ENCODE measurements at regions of chr2 and their contacts with region 1.

Region 1: GRCh38 chr2:37711308-37711731 is 39.9 kb upstream of the CDC42EP3 start:
- DNase-seq: peak; percentile 91
- ATAC-seq: peak; percentile 88
- H3K4me3 ChIP-seq: no peak overlapping the region
- H3K27ac ChIP-seq: peak overlapping the region; percentile 71
- H3K4me1 ChIP-seq: peaks cover 12% of the 10 kb centered on the region
- H3K27me3 ChIP-seq: no peaks in the 10 kb centered on the region
- CTCF ChIP-seq: no peak
- POLR2A ChIP-seq: peak; percentile 39; the same call in 1 of the 2 replicates
- RAD21 ChIP-seq: no peak

Region 2: DNA sequence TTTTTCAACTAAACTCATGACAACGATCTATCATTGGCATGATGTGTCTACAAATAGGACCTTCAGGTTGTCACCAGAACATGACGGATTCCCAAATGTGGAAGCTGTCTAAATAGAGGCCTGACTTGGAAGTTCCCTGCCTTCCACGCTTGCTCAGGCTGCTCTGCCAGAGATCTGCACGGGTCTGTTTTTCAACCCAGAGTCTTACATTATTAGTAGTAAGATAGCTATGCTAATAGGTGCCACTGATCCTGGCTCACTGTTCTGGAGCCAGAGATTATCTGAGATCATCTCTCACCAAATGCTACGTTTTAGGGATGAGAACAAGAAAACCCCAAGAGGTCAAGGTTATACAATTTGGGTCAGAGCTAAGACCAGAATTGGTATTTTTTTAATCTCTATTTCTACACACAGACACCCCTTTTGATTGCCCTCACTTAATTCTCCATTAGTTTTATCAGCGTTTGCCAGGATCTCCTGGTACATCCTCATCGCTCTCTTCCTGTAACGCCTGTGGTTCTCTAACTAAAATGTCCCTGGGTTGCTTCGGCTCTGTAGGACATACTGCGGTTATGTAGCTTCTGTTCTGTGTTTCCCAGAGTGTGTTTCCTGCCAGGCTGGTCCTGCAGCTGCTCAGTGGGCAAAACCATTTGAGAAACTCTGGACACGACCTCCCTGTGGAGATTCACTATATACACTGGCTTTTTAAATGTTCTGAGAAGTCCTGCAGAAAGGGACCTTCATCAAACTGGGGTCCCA is 45.5 kb before region 1 on chr2:
- CTCF ChIA-PET with region 1: no interaction called
- POLR2A ChIA-PET with region 1: interaction called, 11 read pairs
- dilution Hi-C with region 1: no loop called
- in situ Hi-C with region 1: no loop called
- intact Hi-C with region 1: loop called (anchors 2 kb)
- DNase-seq: no peak
- ATAC-seq: no peak
- H3K4me3 ChIP-seq: no peak overlapping the region
- H3K27ac ChIP-seq: peak overlapping the region; percentile 65; the same call in 1 of the 2 replicates
- H3K4me1 ChIP-seq: peaks cover 32% of the 10 kb centered on the region
- H3K27me3 ChIP-seq: no peaks in the 10 kb centered on the region
- CTCF ChIP-seq: no peak
- POLR2A ChIP-seq: no peak
- RAD21 ChIP-seq: no peak

Region 3: GRCh38 chr2:37672104-37672869 is 39.0 kb before region 1 on chr2:
- CTCF ChIA-PET with region 1: no interaction called
- POLR2A ChIA-PET with region 1: interaction called, 5 read pairs
- dilution Hi-C with region 1: no loop called
- in situ Hi-C with region 1: no loop called
- intact Hi-C with region 1: loop called (anchors 2 kb)
- DNase-seq: peak; percentile 88
- ATAC-seq: peak; percentile 53
- H3K4me3 ChIP-seq: peak overlapping the region; percentile 99
- H3K27ac ChIP-seq: peak overlapping the region; percentile 87
- H3K4me1 ChIP-seq: peaks cover 7% of the 10 kb centered on the region
- H3K27me3 ChIP-seq: no peaks in the 10 kb centered on the region
- CTCF ChIP-seq: no peak
- POLR2A ChIP-seq: no peak
- RAD21 ChIP-seq: no peak; the same call in 1 of the 2 replicates

Region 4: GRCh38 chr2:37683921-37684780 is 27.2 kb before region 1 on chr2:
- CTCF ChIA-PET with region 1: no interaction called
- POLR2A ChIA-PET with region 1: no interaction called
- dilution Hi-C with region 1: no loop called
- in situ Hi-C with region 1: no loop called
- intact Hi-C with region 1: no loop called
- DNase-seq: peak; percentile 73
- ATAC-seq: peak; percentile 54; the same call in 1 of the 2 replicates
- H3K4me3 ChIP-seq: no peak overlapping the region
- H3K27ac ChIP-seq: no peak overlapping the region
- H3K4me1 ChIP-seq: peaks cover 11% of the 10 kb centered on the region
- H3K27me3 ChIP-seq: no peaks in the 10 kb centered on the region
- CTCF ChIP-seq: no peak
- POLR2A ChIP-seq: no peak
- RAD21 ChIP-seq: no peak

Region 5: GRCh38 chr2:37767956-37768925 is 56.9 kb after region 1 on chr2:
- CTCF ChIA-PET with region 1: interaction called, 3 read pairs
- POLR2A ChIA-PET with region 1: interaction called, 3 read pairs
- dilution Hi-C with region 1: no loop called
- in situ Hi-C with region 1: no loop called
- intact Hi-C with region 1: loop called (anchors 5 kb)
- DNase-seq: peak; percentile 92
- ATAC-seq: peak; percentile 86
- H3K4me3 ChIP-seq: no peak overlapping the region
- H3K27ac ChIP-seq: peak overlapping the region; percentile 97
- H3K4me1 ChIP-seq: peaks cover 37% of the 10 kb centered on the region
- H3K27me3 ChIP-seq: no peaks in the 10 kb centered on the region
- CTCF ChIP-seq: no peak
- POLR2A ChIP-seq: no peak
- RAD21 ChIP-seq: no peak

Region 6: DNA sequence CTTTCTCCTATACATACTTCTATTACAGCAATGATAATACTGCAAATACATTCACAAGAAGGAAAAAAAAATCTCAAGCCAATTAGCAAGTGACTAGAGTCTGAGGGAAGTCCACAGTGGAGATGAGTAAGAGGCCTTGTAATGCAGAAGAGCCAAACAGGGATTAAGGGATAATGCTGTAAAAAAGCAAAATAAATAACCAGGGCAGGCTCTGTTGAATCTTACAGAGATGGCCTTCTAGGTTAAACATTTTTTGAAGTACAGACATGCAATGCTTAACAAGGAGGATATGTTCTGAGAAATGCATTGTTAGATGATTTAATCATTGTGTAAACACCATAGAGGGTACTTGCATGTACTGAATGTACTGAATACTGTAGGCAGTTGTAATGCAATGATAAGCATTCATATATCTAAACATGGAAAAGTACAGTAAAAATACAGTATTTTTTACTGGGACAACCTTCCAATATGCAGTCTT is 91.6 kb after region 1 on chr2:
- CTCF ChIA-PET with region 1: no interaction called
- POLR2A ChIA-PET with region 1: no interaction called
- dilution Hi-C with region 1: no loop called
- in situ Hi-C with region 1: no loop called
- intact Hi-C with region 1: loop called (anchors 2 kb)
- DNase-seq: peak; percentile 99
- ATAC-seq: peak; percentile 93
- H3K4me3 ChIP-seq: no peak overlapping the region
- H3K27ac ChIP-seq: peak overlapping the region; percentile 100
- H3K4me1 ChIP-seq: peaks cover 29% of the 10 kb centered on the region
- H3K27me3 ChIP-seq: no peaks in the 10 kb centered on the region
- CTCF ChIP-seq: no peak
- POLR2A ChIP-seq: no peak
- RAD21 ChIP-seq: peak; percentile 28